ENCODE measurements at regions of chr3 and their contacts with region 1.

Region 1: DNA sequence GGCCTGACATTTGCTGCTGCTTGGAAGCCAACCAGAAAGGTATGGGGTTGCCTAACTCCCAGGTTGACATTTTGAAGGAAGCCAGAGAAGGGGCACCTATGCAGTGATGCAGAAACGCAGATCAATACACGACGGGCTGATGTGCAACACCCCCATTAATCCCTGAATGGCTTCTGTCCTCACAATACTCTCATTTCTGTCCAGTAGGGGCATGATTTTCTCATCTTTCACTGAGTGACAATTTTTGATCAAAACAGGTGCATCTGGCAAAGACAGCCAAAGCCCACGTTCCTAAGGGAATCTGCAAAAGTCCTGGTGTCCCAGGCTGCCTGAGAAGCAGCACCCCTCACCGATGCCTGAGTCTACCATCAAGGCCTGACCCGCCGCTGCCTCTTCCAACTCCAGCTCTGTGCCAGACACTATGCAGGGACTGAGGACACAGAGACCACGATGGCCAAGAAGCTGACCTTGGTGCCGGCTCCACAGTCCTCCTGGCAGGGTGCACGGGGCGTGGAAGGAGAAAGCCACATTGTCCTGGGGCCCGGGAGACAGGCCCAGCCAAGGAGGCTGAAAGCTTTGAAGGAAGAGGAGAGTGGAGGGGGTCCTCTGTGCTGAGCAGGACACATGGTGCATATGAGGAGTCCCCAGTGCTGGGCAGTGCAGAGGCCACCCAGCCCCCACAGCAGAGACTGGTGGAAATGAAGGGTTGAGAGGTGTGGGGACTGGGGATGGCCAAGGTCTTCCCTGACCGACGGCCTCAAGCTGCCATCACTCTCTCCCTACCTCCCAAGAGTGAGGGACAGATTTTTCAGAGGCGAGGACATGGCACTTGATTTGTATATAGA is 159.6 kb downstream of the NUP210 start:
- DNase-seq: no peak
- ATAC-seq: no peak
- H3K4me3 ChIP-seq: no peak overlapping the region
- H3K27ac ChIP-seq: no peak overlapping the region
- H3K4me1 ChIP-seq: peaks cover 0 to 42% (median 3%) of the 10 kb centered on the region in 9 donors
- H3K27me3 ChIP-seq: peaks cover 0 to 14% (median 4%) of the 10 kb centered on the region in 7 donors
- CTCF ChIP-seq: no peak

Region 2: GRCh38 chr3:13282986-13283876 is 22.8 kb after region 1 on chr3:
- intact Hi-C with region 1: loop called in 1 of 10 experiments (anchors 2 kb)
- DNase-seq: peak in 1 of 2 donors; percentile 46
- ATAC-seq: peak in 2 of 8 donors; percentile 28 to 44
- H3K4me3 ChIP-seq: peak overlapping the region; percentile 25 to 80 (median 66)
- H3K27ac ChIP-seq: peak overlapping the region in 5 of 10 donors; percentile 44 to 91 (median 85)
- H3K4me1 ChIP-seq: peaks cover 0 to 29% (median 15%) of the 10 kb centered on the region in 9 donors
- H3K27me3 ChIP-seq: peaks cover 9 to 78% (median 51%) of the 10 kb centered on the region in 7 donors
- CTCF ChIP-seq: peak in 8 of 9 donors; percentile 11 to 55 (median 34)

Measured in heart right ventricle (tissue), 16 donors.